Lower leg skin (tissue), 4 donors: ENCODE measurements at regions of chr9 and their contacts with region 1.

Region 1: GRCh38 chr9:112361601-112362000 is 18.3 kb upstream of the HSDL2 start:
- DNase-seq: no peak
- H3K4me3 ChIP-seq: no peak overlapping the region
- CTCF ChIP-seq: peak in 1 of 3 donors; percentile 20
- POLR2A ChIP-seq: no peak

Region 2: GRCh38 chr9:111691672-111692329 is 669.8 kb before region 1 on chr9:
- intact Hi-C with region 1: no loop called
- DNase-seq: no peak
- H3K4me3 ChIP-seq: no peak overlapping the region
- CTCF ChIP-seq: no peak
- POLR2A ChIP-seq: no peak

Region 3: GRCh38 chr9:112091810-112092209 is 269.8 kb before region 1 on chr9:
- intact Hi-C with region 1: loop called (anchors 2 kb)
- DNase-seq: no peak
- H3K4me3 ChIP-seq: no peak overlapping the region
- CTCF ChIP-seq: no peak
- POLR2A ChIP-seq: no peak